ENCODE measurements at regions of chr18 and their contacts with region 1.

Region 1: DNA sequence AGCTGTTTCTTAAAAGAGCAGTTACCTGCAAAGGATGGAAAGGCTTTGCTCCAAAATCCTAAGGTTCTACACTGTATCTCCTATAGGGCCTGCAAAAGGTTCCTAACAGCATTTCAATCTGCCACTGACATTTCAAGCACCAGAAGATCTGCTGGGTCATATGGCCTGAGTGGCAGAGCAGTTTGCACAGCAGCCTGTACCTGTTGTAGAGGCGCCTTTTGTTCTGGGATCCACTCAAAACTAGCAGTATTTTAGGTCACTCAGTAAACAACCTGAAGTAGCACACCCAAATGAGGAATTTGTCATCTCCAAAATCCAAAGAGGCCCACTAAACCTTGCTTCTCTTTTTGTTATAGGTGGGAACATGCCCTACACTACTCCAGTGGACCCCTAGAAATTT is 6.2 kb downstream of the FAM210A start:
- DNase-seq: no peak
- ATAC-seq: no peak; the same call in 2 of the 3 replicates
- H3K4me3 ChIP-seq: no peak overlapping the region
- H3K27ac ChIP-seq: no peak overlapping the region
- H3K4me1 ChIP-seq: no peaks in the 10 kb centered on the region; the same call in 1 of the 2 replicates
- H3K27me3 ChIP-seq: no peaks in the 10 kb centered on the region
- CTCF ChIP-seq: no peak
- EP300 ChIP-seq: no peak
- POLR2A ChIP-seq: no peak
- RAD21 ChIP-seq: no peak

Region 2: GRCh38 chr18:13660510-13660909 is 59.6 kb before region 1 on chr18:
- CTCF ChIA-PET with region 1: no interaction called
- POLR2A ChIA-PET with region 1: no interaction called
- RAD21 ChIA-PET with region 1: no interaction called
- SMC1A ChIA-PET with region 1: no interaction called
- in situ Hi-C with region 1: no loop called
- intact Hi-C with region 1: loop called (anchors 5 kb)
- DNase-seq: no peak
- ATAC-seq: no peak
- H3K4me3 ChIP-seq: no peak overlapping the region
- H3K27ac ChIP-seq: no peak overlapping the region
- H3K4me1 ChIP-seq: no peaks in the 10 kb centered on the region
- H3K27me3 ChIP-seq: no peaks in the 10 kb centered on the region
- CTCF ChIP-seq: no peak
- EP300 ChIP-seq: no peak
- POLR2A ChIP-seq: no peak
- RAD21 ChIP-seq: no peak

Measured in GM12878 (cell line).